ENCODE measurements at regions of chr7 and their contacts with region 1.

Region 1: DNA sequence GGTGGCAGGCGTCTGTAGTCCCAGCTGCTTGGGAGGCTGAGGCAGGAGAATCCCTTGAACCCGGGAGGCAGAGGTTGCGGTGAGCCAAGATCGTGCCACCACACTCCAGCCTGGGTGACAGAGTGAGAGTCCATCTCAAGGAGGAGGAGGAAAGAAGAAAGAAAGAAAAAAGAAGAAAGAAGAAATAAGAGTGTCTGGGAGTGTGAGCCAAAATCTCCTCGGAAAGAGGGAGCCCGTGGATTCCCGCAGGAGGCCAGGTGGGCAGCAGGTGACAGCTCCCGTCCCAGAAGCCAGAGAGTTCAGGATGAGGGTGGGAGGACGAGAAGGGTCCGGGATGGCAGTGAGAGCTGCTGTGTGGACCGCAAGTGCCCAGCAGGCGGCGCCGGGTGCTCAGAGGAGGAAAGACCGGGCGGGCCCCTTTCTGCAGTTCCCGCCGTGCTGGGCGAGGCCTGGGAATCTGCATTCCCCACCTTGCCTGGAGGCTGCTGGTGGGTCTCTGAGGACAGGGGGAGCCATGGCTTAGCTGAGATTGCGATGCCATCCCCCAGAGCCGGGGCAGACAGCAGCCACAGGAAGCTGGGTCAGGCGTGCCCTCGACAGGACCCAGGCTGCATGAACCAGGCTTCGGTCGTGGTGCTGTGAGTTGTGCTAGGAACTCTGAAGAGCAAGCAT is 17.1 kb upstream of the AMZ1 start:
- DNase-seq: peak; percentile 54 to 63 (median 60)
- H3K4me3 ChIP-seq: no peak overlapping the region
- H3K4me3 Mint-ChIP-seq: peak overlapping the region in 1 of 2 donors; percentile 1
- H3K27ac ChIP-seq: no peak overlapping the region
- H3K27ac Mint-ChIP-seq: no peak overlapping the region
- H3K4me1 ChIP-seq: peaks cover 5% of the 10 kb centered on the region in 2 donors
- H3K4me1 Mint-ChIP-seq: peaks cover 7% of the 10 kb centered on the region
- H3K27me3 ChIP-seq: peaks cover 0 to 2% of the 10 kb centered on the region in 2 donors
- H3K27me3 Mint-ChIP-seq: peaks cover 21 to 41% (median 23%) of the 10 kb centered on the region in 3 donors
- CTCF ChIP-seq: peak; percentile 98

Region 2: GRCh38 chr7:1979591-1980560 is 691.0 kb before region 1 on chr7:
- intact Hi-C with region 1: no loop called
- DNase-seq: no peak
- H3K4me3 ChIP-seq: no peak overlapping the region
- H3K4me3 Mint-ChIP-seq: no peak overlapping the region
- H3K27ac ChIP-seq: no peak overlapping the region
- H3K27ac Mint-ChIP-seq: peak overlapping the region in 2 of 7 donors; percentile 28 to 46
- H3K4me1 ChIP-seq: no peaks in the 10 kb centered on the region
- H3K4me1 Mint-ChIP-seq: no peaks in the 10 kb centered on the region
- H3K27me3 ChIP-seq: no peaks in the 10 kb centered on the region
- H3K27me3 Mint-ChIP-seq: no peaks in the 10 kb centered on the region
- CTCF ChIP-seq: no peak

Region 3: DNA sequence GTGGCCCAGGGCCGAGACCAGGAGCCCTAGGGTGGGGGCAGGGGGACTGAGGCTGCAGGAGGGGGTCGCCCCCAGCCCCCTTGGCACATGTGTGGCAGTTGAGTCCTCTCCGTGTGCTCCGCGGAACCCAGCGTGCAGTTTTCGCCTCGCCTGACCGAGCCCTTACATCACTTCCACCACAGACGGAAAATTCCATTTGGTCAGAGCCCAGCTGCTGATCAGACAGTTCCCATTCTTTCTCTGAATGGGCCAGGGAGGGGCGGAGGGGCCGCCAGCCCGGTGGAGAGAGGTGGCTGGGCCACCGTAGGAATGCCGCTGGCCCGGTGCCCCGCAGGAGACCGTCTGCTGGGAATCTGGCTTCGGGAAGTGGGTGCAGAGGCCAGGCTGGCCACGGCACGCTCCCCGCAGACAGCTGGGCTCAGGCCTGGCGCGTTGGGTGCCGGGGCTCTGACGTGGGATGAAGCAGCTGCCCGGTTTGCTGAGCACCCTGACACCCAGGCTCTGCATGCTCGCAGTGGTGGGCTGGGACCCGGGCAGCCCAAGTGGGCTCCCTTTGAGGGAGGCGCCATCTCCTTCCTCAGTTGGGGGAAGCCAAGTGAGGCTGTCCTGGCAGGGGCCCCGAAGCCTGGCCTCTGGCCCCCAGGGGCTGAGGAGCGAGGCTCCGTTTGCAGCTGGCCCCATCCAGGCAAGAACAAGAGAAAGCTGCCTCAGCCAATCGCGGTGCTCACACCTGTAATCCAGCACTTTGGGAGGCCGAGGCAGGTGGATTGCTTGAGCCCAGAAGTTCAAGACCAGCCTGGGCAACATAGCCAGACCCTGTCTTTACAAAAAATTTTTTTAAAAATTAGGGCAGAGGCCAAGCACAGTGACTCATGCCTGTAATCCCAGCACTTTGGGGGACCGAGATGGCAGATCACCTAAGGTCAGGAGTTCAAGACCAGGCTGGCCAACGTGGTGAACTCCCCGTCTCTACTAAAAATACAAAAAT is 29.2 kb before region 1 on chr7:
- intact Hi-C with region 1: no loop called
- DNase-seq: peak; percentile 73 to 86 (median 80)
- H3K4me3 ChIP-seq: peak overlapping the region in 1 of 3 experiments; percentile 40
- H3K4me3 Mint-ChIP-seq: peak overlapping the region; percentile 64 to 67
- H3K27ac ChIP-seq: peak overlapping the region; percentile 63 to 71
- H3K27ac Mint-ChIP-seq: peak overlapping the region; percentile 80 to 93 (median 86)
- H3K4me1 ChIP-seq: peaks cover 91 to 92% of the 10 kb centered on the region in 2 donors
- H3K4me1 Mint-ChIP-seq: peaks cover 78% of the 10 kb centered on the region
- H3K27me3 ChIP-seq: no peaks in the 10 kb centered on the region
- H3K27me3 Mint-ChIP-seq: peaks cover 0 to 2% (median 0%) of the 10 kb centered on the region in 3 donors
- CTCF ChIP-seq: no peak

Region 4: DNA sequence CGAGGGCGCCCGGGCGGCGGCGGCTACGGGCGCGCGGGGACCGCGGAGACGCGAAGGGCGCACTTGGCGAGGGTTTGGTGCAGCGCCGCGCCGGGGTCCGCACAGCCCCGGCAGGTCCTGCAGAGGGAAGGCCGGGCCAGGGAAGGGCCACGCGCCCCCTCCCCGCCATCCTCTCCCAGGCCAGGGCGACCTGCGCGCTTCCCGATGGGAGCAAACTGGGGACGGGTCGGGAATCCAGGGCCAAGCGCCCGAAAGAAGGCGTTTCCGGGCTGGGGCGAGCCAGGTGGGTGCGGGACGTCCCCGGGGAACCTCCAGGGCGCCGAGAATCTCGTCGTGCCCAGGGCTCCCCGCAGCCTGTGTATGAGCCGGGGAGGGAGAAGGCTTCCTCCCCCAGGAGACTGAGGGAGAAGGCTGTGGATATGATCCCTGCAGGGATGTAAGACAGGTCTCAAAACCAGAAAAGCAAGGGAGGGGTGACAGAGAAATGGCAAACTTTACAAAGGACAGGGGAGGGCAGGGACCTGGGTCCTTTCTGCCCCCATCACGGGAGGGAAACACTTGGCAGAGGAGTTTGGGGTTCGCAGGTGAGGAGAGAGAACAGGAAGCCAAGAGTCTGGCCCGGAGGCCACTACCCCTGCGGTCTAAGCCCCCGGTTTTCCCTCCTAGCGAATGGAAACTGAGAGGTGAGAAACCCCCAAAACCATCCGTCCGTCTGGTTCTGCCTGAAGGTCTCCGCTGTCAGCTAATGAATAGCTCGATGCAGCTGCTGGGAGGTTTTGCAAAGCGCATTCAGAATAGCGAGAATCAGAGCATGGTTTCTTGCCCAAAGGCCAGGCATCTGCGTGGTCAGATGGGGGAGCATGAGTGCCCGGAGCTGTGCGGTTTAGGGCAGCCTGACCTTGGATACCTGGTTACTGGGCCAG is 17.8 kb after region 1 on chr7:
- intact Hi-C with region 1: loop called in 1 of 2 experiments (anchors 2 kb)
- DNase-seq: no peak
- H3K4me3 ChIP-seq: peak overlapping the region in 1 of 3 experiments; percentile 21
- H3K4me3 Mint-ChIP-seq: peak overlapping the region; percentile 53 to 85
- H3K27ac ChIP-seq: no peak overlapping the region
- H3K27ac Mint-ChIP-seq: peak overlapping the region in 4 of 7 donors; percentile 57 to 82 (median 73)
- H3K4me1 ChIP-seq: peaks cover 57 to 60% of the 10 kb centered on the region in 2 donors
- H3K4me1 Mint-ChIP-seq: peaks cover 36% of the 10 kb centered on the region
- H3K27me3 ChIP-seq: peaks cover 15 to 46% of the 10 kb centered on the region in 2 donors
- H3K27me3 Mint-ChIP-seq: peaks cover 45 to 66% (median 65%) of the 10 kb centered on the region in 3 donors
- CTCF ChIP-seq: no peak

Region 5: DNA sequence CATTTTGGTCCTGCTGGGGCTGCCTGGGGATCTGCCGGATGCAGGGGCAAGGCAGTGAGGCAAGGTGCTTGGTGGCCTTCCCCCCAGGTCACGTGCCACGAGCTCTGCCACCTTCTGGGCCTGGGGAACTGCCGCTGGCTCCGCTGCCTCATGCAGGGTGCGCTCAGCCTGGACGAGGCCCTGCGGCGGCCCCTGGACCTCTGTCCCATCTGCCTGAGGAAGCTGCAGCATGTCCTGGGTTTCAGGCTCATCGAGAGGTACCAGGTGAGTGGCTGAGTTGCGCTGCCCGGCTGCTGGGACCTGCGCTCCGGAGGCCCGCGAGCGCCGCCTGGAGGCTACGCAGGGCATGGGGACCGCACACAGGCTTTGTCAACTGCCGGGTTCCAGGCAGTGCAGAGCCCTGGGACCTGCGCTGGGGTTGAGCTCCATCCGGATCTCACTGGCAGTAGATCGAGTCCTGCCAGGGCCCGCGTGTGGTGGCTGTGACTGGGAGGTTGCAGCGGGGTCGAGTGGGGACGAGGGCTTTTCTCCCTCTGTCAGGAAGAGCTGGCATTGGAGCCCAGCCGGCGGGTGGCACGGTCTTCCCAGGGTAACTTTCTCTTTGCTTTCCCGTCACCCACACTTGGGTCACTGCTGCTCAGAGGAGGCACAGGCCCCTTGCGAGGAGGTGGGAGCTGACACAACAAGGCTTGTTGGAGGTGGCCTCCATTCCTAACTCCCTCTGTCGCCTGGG is 38.9 kb after region 1 on chr7:
- intact Hi-C with region 1: loop called (anchors 2 to 5 kb)
- DNase-seq: peak; percentile 68 to 71 (median 68)
- H3K4me3 ChIP-seq: peak overlapping the region in 1 of 3 experiments; percentile 49
- H3K4me3 Mint-ChIP-seq: peak overlapping the region; percentile 55 to 83
- H3K27ac ChIP-seq: peak overlapping the region in 1 of 2 donors; percentile 9
- H3K27ac Mint-ChIP-seq: peak overlapping the region in 1 of 7 donors; percentile 56
- H3K4me1 ChIP-seq: peaks cover 18 to 22% of the 10 kb centered on the region in 2 donors
- H3K4me1 Mint-ChIP-seq: peaks cover 30% of the 10 kb centered on the region
- H3K27me3 ChIP-seq: peaks cover 0 to 6% of the 10 kb centered on the region in 2 donors
- H3K27me3 Mint-ChIP-seq: peaks cover 13 to 47% (median 20%) of the 10 kb centered on the region in 3 donors
- CTCF ChIP-seq: peak; percentile 91